Endothelial cell of umbilical vein (primary cell): ENCODE measurements at regions of chr9 and their contacts with region 1.

Region 1: GRCh38 chr9:121744002-121744686 is 92.7 kb downstream of the DAB2IP start:
- DNase-seq: peak; percentile 57
- H3K4me3 ChIP-seq: peak overlapping the region; percentile 13 to 60 (median 38)
- H3K27ac ChIP-seq: peak overlapping the region; percentile 70
- H3K4me1 ChIP-seq: peaks cover 28% of the 10 kb centered on the region
- H3K27me3 ChIP-seq: no peaks in the 10 kb centered on the region
- CTCF ChIP-seq: peak; percentile 32 to 48
- POLR2A ChIP-seq: no peak

Region 2: DNA sequence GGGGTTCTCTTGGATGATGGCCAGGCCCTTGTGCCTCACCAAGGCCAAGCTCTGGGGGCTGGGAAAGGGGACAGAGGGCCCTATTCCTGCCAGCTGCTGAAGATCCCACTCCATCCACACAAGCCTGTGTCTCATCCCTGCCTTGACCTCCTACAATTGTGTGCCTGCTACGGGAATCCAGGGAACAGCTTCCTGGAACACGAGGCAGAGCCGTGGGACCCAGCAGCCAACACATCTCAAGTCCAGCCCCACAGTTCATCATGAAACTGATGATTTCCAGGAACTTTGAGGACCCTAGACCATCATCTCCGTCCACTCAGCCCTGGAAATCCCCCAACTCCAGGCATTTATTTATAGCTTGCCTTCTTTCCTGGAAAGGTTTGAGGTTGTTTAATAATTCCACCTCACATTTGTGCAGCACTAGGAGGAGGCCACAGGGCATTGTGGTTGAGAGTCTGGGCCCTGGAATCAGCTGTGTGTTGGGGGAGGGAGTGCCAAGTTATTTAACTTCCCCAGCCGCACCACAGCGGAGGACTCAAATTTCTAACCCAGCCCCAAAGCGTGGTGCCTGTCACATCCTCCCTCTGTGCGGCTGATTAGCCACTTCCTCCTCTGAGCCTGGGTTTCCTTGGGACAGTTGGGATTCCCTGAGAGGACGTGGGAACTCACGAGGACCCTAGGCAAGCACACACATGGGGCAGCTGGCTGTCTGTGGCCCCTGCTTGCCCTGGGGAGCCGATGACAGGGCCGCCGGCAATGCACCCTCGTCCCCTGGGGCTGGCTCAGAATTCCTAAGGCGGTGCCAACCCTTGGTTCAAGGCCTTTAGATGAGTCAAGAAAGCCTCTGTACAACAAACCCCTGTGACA is 186.3 kb before region 1 on chr9:
- CTCF ChIA-PET with region 1: no interaction called
- POLR2A ChIA-PET with region 1: no interaction called
- dilution Hi-C with region 1: no loop called
- intact Hi-C with region 1: no loop called
- DNase-seq: peak; percentile 83
- H3K4me3 ChIP-seq: no peak overlapping the region
- H3K27ac ChIP-seq: peak overlapping the region; percentile 83
- H3K4me1 ChIP-seq: peaks cover 20% of the 10 kb centered on the region
- H3K27me3 ChIP-seq: no peaks in the 10 kb centered on the region
- CTCF ChIP-seq: no peak
- POLR2A ChIP-seq: no peak

Region 3: GRCh38 chr9:121725008-121725775 is 19.0 kb before region 1 on chr9:
- CTCF ChIA-PET with region 1: interaction called, 8 read pairs
- POLR2A ChIA-PET with region 1: no interaction called
- dilution Hi-C with region 1: no loop called
- intact Hi-C with region 1: loop called (anchors 1 kb)
- DNase-seq: peak; percentile 97
- H3K4me3 ChIP-seq: no peak overlapping the region
- H3K27ac ChIP-seq: peak overlapping the region; percentile 71
- H3K4me1 ChIP-seq: peaks cover 23% of the 10 kb centered on the region
- H3K27me3 ChIP-seq: no peaks in the 10 kb centered on the region
- CTCF ChIP-seq: no peak
- POLR2A ChIP-seq: no peak

Region 4: GRCh38 chr9:121765021-121765950 is 21.1 kb after region 1 on chr9:
- CTCF ChIA-PET with region 1: interaction called, 3 read pairs
- POLR2A ChIA-PET with region 1: no interaction called
- dilution Hi-C with region 1: no loop called
- intact Hi-C with region 1: loop called (anchors 1 kb)
- DNase-seq: peak; percentile 88
- H3K4me3 ChIP-seq: no peak overlapping the region
- H3K27ac ChIP-seq: peak overlapping the region; percentile 52
- H3K4me1 ChIP-seq: peaks cover 16% of the 10 kb centered on the region
- H3K27me3 ChIP-seq: no peaks in the 10 kb centered on the region
- CTCF ChIP-seq: no peak
- POLR2A ChIP-seq: no peak

Region 5: DNA sequence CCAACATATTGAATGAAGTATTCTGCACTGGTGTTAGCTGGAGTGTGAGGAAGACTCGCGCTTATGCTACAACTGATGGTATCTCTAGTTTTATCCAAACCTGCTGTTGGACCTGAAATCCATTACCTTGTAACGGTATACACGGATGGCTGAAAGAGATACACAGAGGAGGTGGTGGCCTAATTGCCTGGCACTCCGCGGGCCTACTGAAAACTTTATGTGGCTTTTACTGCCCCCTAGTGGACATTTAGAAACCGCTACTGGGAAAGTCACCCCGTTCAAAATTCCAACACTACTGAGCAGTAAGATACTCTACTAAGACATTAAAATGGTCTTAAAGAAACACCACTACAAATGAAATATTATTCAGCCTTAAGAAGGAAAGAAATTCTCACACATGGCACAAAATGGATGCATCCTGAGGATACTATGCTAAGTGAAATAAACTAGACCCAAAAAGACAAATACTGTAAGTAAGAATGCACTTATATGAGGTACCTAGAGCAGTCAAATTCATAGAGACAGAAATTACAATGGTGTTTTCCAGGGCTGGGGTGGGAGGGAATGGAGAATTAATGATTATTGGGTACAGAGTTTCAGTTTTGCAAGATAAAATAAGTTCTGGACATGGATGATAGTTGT is 248.5 kb after region 1 on chr9:
- CTCF ChIA-PET with region 1: interaction called, 4 read pairs
- POLR2A ChIA-PET with region 1: no interaction called
- dilution Hi-C with region 1: no loop called
- intact Hi-C with region 1: loop called (anchors 2 kb)
- DNase-seq: peak; percentile 74
- H3K4me3 ChIP-seq: no peak overlapping the region
- H3K27ac ChIP-seq: no peak overlapping the region
- H3K4me1 ChIP-seq: peaks cover 5% of the 10 kb centered on the region
- H3K27me3 ChIP-seq: no peaks in the 10 kb centered on the region
- CTCF ChIP-seq: peak; percentile 58 to 68
- POLR2A ChIP-seq: no peak